Transverse colon (tissue), 4 donors: ENCODE measurements at regions of chr3 and their contacts with region 1.

Region 1: DNA sequence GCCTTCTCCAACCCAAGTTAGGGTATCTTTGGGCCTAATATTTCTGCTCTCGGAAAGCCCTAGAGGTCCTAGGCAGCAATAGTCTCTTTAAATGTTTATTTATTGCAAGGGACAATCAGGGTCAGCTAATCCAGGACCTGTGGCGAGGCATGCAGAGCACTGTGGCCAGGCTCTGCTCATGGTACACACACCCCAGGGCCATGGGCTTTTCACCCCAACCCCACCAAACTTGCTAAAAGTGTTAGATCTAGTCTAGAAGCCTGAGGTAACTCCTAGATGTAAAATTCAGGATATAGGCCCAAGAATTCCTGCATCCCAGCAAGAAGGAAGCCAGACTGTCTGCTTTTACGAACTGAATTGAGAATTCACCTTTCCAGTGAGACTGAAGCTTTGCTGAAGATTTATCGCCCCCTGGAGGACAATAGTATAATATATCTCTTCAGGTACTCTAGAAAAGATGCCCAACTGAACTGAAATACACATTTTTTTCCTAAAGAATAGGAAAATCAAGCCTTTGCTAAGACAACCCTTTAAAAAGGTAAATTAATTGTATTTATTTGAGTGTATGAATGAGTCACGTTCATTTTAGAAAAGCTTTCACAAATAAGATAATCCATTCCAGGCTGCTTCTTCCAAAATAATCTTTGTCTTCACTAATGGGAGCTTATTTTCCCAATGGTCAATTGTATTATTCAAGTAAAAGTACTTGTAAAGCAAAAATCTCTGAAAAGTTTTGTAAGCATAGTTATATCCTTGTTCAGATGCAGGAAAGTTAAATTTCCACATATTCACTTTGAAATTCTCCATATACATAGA is 89.8 kb downstream of the LRRC3B start:
- DNase-seq: no peak
- H3K4me3 ChIP-seq: no peak overlapping the region
- H3K27ac ChIP-seq: no peak overlapping the region
- H3K4me1 ChIP-seq: no peaks in the 10 kb centered on the region
- H3K27me3 ChIP-seq: no peaks in the 10 kb centered on the region
- CTCF ChIP-seq: peak; percentile 45 to 63 (median 54)
- EP300 ChIP-seq: no peak
- POLR2A ChIP-seq: no peak

Region 2: GRCh38 chr3:25755257-25755656 is 957.2 kb before region 1 on chr3:
- in situ Hi-C with region 1: no loop called
- intact Hi-C with region 1: loop called (anchors 5 kb)
- DNase-seq: no peak
- H3K4me3 ChIP-seq: no peak overlapping the region
- H3K27ac ChIP-seq: no peak overlapping the region
- H3K4me1 ChIP-seq: no peaks in the 10 kb centered on the region
- H3K27me3 ChIP-seq: no peaks in the 10 kb centered on the region
- CTCF ChIP-seq: no peak
- EP300 ChIP-seq: no peak
- POLR2A ChIP-seq: no peak

Region 3: GRCh38 chr3:25831578-25831977 is 880.8 kb before region 1 on chr3:
- in situ Hi-C with region 1: loop called in 1 of 4 experiments (anchors 25 kb)
- intact Hi-C with region 1: no loop called
- DNase-seq: no peak
- H3K4me3 ChIP-seq: no peak overlapping the region
- H3K27ac ChIP-seq: no peak overlapping the region
- H3K4me1 ChIP-seq: peaks cover 0 to 5% (median 0%) of the 10 kb centered on the region in 4 donors
- H3K27me3 ChIP-seq: no peaks in the 10 kb centered on the region
- CTCF ChIP-seq: no peak
- EP300 ChIP-seq: no peak
- POLR2A ChIP-seq: no peak

Region 4: DNA sequence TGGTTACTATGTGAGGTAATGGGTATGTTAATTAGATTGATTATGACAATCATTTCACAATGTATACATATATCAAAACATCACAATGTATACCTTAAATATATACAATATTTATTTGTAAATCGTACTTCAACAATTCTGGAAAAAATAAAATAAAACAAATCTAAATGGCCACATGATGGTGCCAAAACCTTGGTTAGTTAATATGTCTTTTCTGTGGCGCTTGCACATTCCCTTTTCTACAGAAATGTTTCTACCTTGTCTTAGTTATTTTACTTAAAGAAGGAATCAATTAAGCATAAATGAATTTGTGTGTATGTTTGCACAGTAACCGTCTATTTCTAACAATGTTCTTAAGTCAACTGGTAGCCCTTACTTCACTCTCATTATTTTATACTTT is 869.1 kb before region 1 on chr3:
- in situ Hi-C with region 1: loop called in 1 of 4 experiments (anchors 25 kb)
- intact Hi-C with region 1: loop called (anchors 5 kb)
- DNase-seq: no peak
- H3K4me3 ChIP-seq: no peak overlapping the region
- H3K27ac ChIP-seq: no peak overlapping the region
- H3K4me1 ChIP-seq: no peaks in the 10 kb centered on the region
- H3K27me3 ChIP-seq: no peaks in the 10 kb centered on the region
- CTCF ChIP-seq: peak in 1 of 5 experiments; percentile 16
- EP300 ChIP-seq: no peak
- POLR2A ChIP-seq: no peak